Heart right ventricle (tissue), 16 donors: ENCODE measurements at regions of chr1 and their contacts with region 1.

Region 1: GRCh38 chr1:220776720-220777326 is 9.9 kb upstream of the MTARC1 start:
- DNase-seq: peak; percentile 84 to 87
- ATAC-seq: peak; percentile 92 to 95 (median 94)
- H3K4me3 ChIP-seq: no peak overlapping the region
- H3K27ac ChIP-seq: no peak overlapping the region
- H3K4me1 ChIP-seq: peaks cover 0 to 11% (median 3%) of the 10 kb centered on the region in 9 donors
- H3K27me3 ChIP-seq: no peaks in the 10 kb centered on the region
- CTCF ChIP-seq: peak; percentile 69 to 98 (median 94)

Region 2: DNA sequence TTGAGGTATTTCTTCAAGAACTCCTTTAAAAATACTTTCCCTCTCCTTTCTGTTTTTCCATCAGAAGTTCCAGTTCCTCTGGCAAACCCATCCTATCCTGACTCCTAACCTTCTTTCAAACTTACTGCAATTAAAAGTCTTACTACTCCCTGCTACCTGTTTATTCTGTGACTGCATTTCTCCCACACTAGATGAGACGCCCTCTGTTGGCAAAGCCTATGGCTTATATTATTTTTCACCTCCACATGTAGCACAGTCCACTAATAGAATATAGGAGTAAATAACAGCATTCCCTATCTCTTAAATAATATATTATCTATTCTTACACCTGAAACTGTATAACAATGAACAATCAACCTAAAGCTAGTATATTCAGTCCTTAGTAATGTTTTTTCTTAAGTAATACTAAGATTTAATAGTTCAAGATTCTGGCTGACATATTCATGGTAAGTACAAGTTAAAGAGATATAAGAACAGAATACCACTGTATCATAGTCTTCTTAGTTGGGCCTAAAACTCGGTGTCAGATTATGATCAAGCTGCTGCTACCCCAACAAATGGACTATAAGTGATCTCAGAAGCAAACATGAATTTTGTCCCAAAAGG is 559.3 kb before region 1 on chr1:
- intact Hi-C with region 1: loop called in 2 of 10 experiments (anchors 5 to 10 kb)
- DNase-seq: no peak
- ATAC-seq: peak in 1 of 8 donors; percentile 52
- H3K4me3 ChIP-seq: no peak overlapping the region
- H3K27ac ChIP-seq: no peak overlapping the region
- H3K4me1 ChIP-seq: peaks cover 0 to 28% (median 14%) of the 10 kb centered on the region in 9 donors
- H3K27me3 ChIP-seq: no peaks in the 10 kb centered on the region
- CTCF ChIP-seq: peak in 6 of 9 donors; percentile 15 to 47 (median 32)

Region 3: DNA sequence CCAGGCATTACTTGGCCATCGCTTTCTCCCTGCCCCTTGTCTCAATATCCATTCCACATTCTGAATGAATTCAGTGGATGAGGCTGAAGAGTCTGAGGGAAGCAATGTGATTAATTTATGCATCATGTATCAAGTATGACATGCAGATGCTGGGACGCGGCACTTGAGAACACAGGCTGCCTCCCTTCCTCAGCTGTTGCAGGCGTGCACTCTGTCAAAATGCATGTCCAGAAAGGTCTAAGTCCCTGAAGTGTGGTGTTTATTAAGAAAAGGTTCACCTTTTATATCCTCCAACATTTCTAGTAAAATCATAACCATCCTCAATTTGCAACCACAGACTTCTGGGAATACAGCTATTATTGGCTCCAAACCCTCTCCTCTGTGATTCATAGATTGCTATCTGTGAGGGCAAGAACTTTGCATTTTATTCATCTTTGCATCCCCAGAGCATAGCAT is 481.9 kb before region 1 on chr1:
- intact Hi-C with region 1: loop called in 3 of 10 experiments (anchors 5 to 10 kb)
- DNase-seq: no peak
- ATAC-seq: no peak
- H3K4me3 ChIP-seq: no peak overlapping the region
- H3K27ac ChIP-seq: no peak overlapping the region
- H3K4me1 ChIP-seq: peaks cover 0 to 6% (median under 1%) of the 10 kb centered on the region in 9 donors
- H3K27me3 ChIP-seq: peaks cover 0 to 17% (median 0%) of the 10 kb centered on the region in 7 donors
- CTCF ChIP-seq: no peak

Region 4: GRCh38 chr1:220680085-220680687 is 96.6 kb before region 1 on chr1:
- intact Hi-C with region 1: loop called in 8 of 10 experiments (anchors 2 to 10 kb)
- DNase-seq: no peak
- ATAC-seq: peak in 7 of 8 donors; percentile 49 to 87 (median 73)
- H3K4me3 ChIP-seq: no peak overlapping the region
- H3K27ac ChIP-seq: no peak overlapping the region
- H3K4me1 ChIP-seq: peaks cover 0 to 6% (median 0%) of the 10 kb centered on the region in 9 donors
- H3K27me3 ChIP-seq: no peaks in the 10 kb centered on the region
- CTCF ChIP-seq: peak; percentile 65 to 88 (median 78)

Region 5: GRCh38 chr1:220690140-220691025 is 86.4 kb before region 1 on chr1 and contains the start of gene C1orf115:
- intact Hi-C with region 1: loop called in 5 of 10 experiments (anchors 2 to 10 kb)
- DNase-seq: peak; percentile 70 to 83
- ATAC-seq: peak; percentile 94 to 98 (median 96)
- H3K4me3 ChIP-seq: peak within 1 kb of the TSS; percentile 51 to 93 (median 76)
- H3K27ac ChIP-seq: peak within 1 kb of the TSS; percentile 2 to 87 (median 76)
- H3K4me1 ChIP-seq: peaks cover 0 to 25% (median 14%) of the 10 kb centered on the region in 9 donors
- H3K27me3 ChIP-seq: peaks cover 0 to 27% (median 0%) of the 10 kb centered on the region in 7 donors
- CTCF ChIP-seq: peak; percentile 97 to 100 (median 99)
- total RNA-seq, gene C1orf115: 6.2 to 24.8 (median 12.5) TPM

Region 6: DNA sequence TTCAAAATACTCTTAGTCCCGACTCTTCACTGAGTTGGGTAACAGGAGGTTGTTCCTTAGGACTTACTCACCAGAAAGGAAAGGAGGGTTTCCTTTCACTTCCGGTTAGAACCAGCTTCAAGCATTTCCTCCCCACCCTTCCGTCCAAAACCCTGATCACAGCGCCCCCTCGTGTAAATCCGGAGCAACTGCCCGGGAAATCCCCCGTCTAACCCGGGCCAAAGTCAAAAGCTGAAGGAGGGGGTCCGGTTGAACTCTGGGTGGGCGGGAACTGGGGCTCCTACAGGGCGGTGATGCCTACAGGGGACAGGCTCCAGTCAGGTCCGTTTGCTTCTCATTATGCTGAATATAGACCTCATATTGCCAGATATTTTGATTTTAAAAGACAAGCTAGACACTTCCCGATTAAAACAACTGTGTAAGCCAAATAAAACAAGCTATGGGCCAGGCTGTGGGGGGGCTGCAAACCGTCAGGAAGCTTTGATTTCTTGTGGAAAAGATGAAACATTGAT is 43.7 kb before region 1 on chr1:
- intact Hi-C with region 1: loop called in 1 of 10 experiments (anchors 2 kb)
- DNase-seq: peak; percentile 74 to 92
- ATAC-seq: peak; percentile 93 to 98 (median 96)
- H3K4me3 ChIP-seq: peak overlapping the region in 9 of 10 donors; percentile 2 to 44 (median 35)
- H3K27ac ChIP-seq: peak overlapping the region; percentile 7 to 93 (median 78)
- H3K4me1 ChIP-seq: peaks cover 0 to 25% (median 18%) of the 10 kb centered on the region in 9 donors
- H3K27me3 ChIP-seq: no peaks in the 10 kb centered on the region
- CTCF ChIP-seq: peak; percentile 81 to 94 (median 90)

Region 7: DNA sequence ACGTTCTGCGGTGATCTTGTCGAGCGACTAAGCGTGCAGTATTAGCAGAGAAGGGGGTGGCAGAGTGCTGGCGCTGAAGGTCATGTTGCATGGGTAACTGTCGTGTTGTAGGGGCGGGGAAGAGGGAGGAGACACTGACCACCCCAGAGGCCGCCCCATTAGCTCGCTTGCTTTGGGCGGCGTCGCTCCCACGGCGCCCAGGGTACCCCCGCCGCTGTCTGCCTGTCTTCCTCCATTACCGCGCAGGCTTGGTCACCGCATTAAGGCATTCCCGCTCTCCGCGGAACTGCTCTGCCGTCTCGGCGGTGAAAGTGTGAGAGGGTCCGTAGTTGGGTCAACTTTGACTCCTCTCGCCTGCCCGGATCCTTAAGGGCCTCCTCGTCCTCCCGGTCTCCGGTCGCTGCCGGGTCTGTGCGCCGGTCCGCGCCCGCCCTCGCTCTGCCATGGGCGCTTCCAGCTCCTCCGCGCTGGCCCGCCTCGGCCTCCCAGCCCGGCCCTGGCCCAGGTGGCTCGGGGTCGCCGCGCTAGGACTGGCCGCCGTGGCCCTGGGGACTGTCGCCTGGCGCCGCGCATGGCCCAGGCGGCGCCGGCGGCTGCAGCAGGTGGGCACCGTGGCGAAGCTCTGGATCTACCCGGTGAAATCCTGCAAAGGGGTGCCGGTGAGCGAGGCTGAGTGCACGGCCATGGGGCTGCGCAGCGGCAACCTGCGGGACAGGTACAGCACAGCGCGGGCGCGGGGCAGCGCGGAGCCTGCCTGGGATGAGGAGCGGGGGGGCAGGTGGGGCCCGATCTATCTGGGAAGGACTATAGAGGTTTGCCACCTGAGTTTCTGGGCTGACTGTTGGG is 28.5 kb before region 1 on chr1 and contains the start of gene MTARC2:
- intact Hi-C with region 1: loop called in 1 of 10 experiments (anchors 2 kb)
- DNase-seq: peak; percentile 82 to 90
- ATAC-seq: peak; percentile 96 to 98 (median 97)
- H3K4me3 ChIP-seq: peak within 1 kb of the TSS; percentile 67 to 99 (median 78)
- H3K27ac ChIP-seq: peak within 1 kb of the TSS; percentile 80 to 98 (median 92)
- H3K4me1 ChIP-seq: peaks cover 10 to 56% (median 38%) of the 10 kb centered on the region in 9 donors
- H3K27me3 ChIP-seq: peaks cover 0 to 12% (median 0%) of the 10 kb centered on the region in 7 donors
- CTCF ChIP-seq: peak in 1 of 9 donors; percentile 3
- total RNA-seq, gene MTARC2: 16.2 to 32.3 (median 26.6) TPM

Region 8: GRCh38 chr1:220810179-220810653 is 33.4 kb after region 1 on chr1:
- intact Hi-C with region 1: no loop called
- DNase-seq: peak; percentile 79
- ATAC-seq: peak; percentile 79 to 93 (median 87)
- H3K4me3 ChIP-seq: peak overlapping the region in 8 of 10 donors; percentile 18 to 42 (median 34)
- H3K27ac ChIP-seq: peak overlapping the region in 2 of 10 donors; percentile 21 to 33
- H3K4me1 ChIP-seq: peaks cover 4 to 15% (median 12%) of the 10 kb centered on the region in 9 donors
- H3K27me3 ChIP-seq: no peaks in the 10 kb centered on the region
- CTCF ChIP-seq: peak; percentile 83 to 96 (median 95)